ENCODE measurements at regions of chr16 and their contacts with region 1.

Region 1: GRCh38 chr16:17467923-17468540 is 2.7 kb downstream of the XYLT1 start:
- DNase-seq: peak; percentile 67 to 88 (median 78)
- H3K4me3 ChIP-seq: no peak overlapping the region
- H3K27ac ChIP-seq: no peak overlapping the region
- H3K4me1 ChIP-seq: peaks cover 0 to 43% of the 10 kb centered on the region in 2 donors
- H3K27me3 ChIP-seq: no peaks in the 10 kb centered on the region
- CTCF ChIP-seq: peak; percentile 51 to 83 (median 68)
- POLR2A ChIP-seq: no peak

Region 2: GRCh38 chr16:17194190-17194780 is 273.7 kb before region 1 on chr16:
- intact Hi-C with region 1: loop called in 1 of 2 experiments (anchors 10 kb)
- DNase-seq: peak; percentile 40 to 82 (median 59)
- H3K4me3 ChIP-seq: no peak overlapping the region
- H3K27ac ChIP-seq: no peak overlapping the region
- H3K4me1 ChIP-seq: no peaks in the 10 kb centered on the region
- H3K27me3 ChIP-seq: no peaks in the 10 kb centered on the region
- CTCF ChIP-seq: peak; percentile 46 to 77 (median 66)
- POLR2A ChIP-seq: no peak

Region 3: DNA sequence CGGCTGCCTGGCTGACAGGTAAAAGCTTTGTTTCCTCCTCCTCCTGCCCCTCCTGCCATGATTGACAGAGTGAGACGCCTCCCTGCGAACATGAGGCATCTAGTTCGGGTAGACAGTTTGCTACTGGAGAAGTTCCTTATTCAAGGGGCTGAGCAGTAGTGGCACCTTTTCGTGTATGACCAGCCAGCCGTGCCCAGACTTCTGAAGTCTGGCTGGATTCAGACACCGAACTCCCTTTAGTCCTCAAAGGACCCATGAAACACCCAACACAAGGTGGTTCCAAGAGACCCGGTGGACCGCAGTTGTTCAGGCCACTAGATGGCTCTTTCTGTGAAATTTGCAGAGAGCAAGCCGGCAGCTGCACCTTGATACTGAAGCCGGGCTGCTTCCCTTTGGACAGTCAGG is 190.1 kb before region 1 on chr16:
- intact Hi-C with region 1: loop called in 1 of 2 experiments (anchors 10 kb)
- DNase-seq: peak in 5 of 7 donors; percentile 46 to 81 (median 62)
- H3K4me3 ChIP-seq: no peak overlapping the region
- H3K27ac ChIP-seq: peak overlapping the region in 1 of 5 donors; percentile 12
- H3K4me1 ChIP-seq: peaks cover 0 to 21% of the 10 kb centered on the region in 2 donors
- H3K27me3 ChIP-seq: no peaks in the 10 kb centered on the region
- CTCF ChIP-seq: peak; percentile 22 to 50 (median 46)
- POLR2A ChIP-seq: no peak

Region 4: DNA sequence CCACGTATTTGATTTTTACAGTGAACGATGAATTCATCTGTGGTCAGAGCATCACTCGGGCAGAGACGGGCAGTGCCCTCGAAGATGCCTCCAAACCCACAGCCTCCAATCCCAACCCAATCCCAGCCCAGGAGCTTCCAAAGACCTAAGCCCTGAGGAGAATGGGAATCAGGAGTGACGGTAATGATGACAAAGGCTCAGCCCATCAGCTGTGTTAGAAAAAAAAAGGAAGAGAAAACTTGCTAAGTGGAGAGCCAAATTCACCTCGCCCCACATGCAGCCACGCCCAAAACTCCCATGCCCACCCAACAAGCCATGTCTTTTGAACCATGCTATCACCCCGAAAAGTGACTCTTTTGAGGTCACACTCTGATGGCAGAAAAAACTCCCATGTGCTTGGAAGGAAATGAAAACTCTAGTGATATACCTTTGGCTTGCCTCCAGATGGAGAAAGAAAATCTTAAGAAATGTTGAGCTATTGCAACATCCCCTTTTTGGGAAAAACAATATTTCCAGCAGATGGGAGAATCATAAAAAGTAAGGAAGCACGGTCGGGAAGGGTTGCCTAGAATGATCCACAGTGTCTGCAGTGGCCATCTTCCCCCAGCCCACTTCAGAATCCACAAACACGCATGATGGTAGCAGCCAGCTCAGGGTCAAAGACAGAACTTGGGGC is 35.0 kb before region 1 on chr16:
- intact Hi-C with region 1: no loop called
- DNase-seq: no peak
- H3K4me3 ChIP-seq: no peak overlapping the region
- H3K27ac ChIP-seq: peak overlapping the region in 2 of 5 donors; percentile 57 to 67
- H3K4me1 ChIP-seq: peaks cover 0 to 12% of the 10 kb centered on the region in 2 donors
- H3K27me3 ChIP-seq: no peaks in the 10 kb centered on the region
- CTCF ChIP-seq: no peak
- POLR2A ChIP-seq: no peak

Region 5: GRCh38 chr16:17578921-17579874 is 111.2 kb after region 1 on chr16:
- intact Hi-C with region 1: no loop called
- DNase-seq: peak; percentile 61 to 82 (median 69)
- H3K4me3 ChIP-seq: no peak overlapping the region
- H3K27ac ChIP-seq: no peak overlapping the region
- H3K4me1 ChIP-seq: no peaks in the 10 kb centered on the region
- H3K27me3 ChIP-seq: no peaks in the 10 kb centered on the region
- CTCF ChIP-seq: peak; percentile 75 to 92 (median 81)
- POLR2A ChIP-seq: no peak